MCF 10A (cell line): ENCODE measurements at regions of chr6 and their contacts with region 1.

Region 1: GRCh38 chr6:150180517-150180916 is 37.7 kb downstream of the PPP1R14C start:
- DNase-seq: no peak
- H3K4me3 Mint-ChIP-seq: no peak overlapping the region
- H3K27ac Mint-ChIP-seq: no peak overlapping the region
- H3K4me1 Mint-ChIP-seq: peaks cover 32% of the 10 kb centered on the region
- H3K27me3 Mint-ChIP-seq: no peaks in the 10 kb centered on the region
- CTCF ChIP-seq: no peak

Region 2: GRCh38 chr6:150169609-150170008 is 10.9 kb before region 1 on chr6:
- CTCF ChIA-PET with region 1: interaction called, 3 read pairs
- POLR2A ChIA-PET with region 1: interaction called, 13 read pairs
- intact Hi-C with region 1: no loop called
- DNase-seq: peak; percentile 73
- H3K4me3 Mint-ChIP-seq: no peak overlapping the region
- H3K27ac Mint-ChIP-seq: peak overlapping the region; percentile 69
- H3K4me1 Mint-ChIP-seq: peaks cover 11% of the 10 kb centered on the region
- H3K27me3 Mint-ChIP-seq: no peaks in the 10 kb centered on the region
- CTCF ChIP-seq: no peak

Region 3: DNA sequence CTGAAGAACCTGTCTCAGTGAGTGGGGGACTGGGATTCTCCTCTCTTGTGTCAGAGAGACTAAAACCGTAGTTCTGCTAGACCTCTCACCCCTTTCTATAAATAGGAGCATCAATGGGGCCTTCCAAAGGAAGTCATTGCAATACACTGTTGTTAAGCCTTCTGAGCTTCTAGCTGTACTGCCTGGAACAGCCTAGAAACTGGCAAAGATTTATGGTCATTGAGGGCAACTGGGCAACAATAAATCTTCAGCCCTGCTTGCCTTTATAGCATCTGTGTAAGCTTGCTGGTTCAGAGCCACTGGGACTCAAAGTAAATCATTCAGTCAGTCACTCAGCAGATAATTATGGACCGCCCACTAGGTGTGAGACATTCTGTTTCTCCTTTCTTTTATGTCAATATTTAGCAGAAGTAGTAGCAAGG is 15.5 kb after region 1 on chr6:
- CTCF ChIA-PET with region 1: interaction called, 4 read pairs
- POLR2A ChIA-PET with region 1: interaction called, 10 read pairs
- intact Hi-C with region 1: no loop called
- DNase-seq: no peak
- H3K4me3 Mint-ChIP-seq: no peak overlapping the region
- H3K27ac Mint-ChIP-seq: peak overlapping the region; percentile 67
- H3K4me1 Mint-ChIP-seq: peaks cover 57% of the 10 kb centered on the region
- H3K27me3 Mint-ChIP-seq: no peaks in the 10 kb centered on the region
- CTCF ChIP-seq: no peak

Region 4: DNA sequence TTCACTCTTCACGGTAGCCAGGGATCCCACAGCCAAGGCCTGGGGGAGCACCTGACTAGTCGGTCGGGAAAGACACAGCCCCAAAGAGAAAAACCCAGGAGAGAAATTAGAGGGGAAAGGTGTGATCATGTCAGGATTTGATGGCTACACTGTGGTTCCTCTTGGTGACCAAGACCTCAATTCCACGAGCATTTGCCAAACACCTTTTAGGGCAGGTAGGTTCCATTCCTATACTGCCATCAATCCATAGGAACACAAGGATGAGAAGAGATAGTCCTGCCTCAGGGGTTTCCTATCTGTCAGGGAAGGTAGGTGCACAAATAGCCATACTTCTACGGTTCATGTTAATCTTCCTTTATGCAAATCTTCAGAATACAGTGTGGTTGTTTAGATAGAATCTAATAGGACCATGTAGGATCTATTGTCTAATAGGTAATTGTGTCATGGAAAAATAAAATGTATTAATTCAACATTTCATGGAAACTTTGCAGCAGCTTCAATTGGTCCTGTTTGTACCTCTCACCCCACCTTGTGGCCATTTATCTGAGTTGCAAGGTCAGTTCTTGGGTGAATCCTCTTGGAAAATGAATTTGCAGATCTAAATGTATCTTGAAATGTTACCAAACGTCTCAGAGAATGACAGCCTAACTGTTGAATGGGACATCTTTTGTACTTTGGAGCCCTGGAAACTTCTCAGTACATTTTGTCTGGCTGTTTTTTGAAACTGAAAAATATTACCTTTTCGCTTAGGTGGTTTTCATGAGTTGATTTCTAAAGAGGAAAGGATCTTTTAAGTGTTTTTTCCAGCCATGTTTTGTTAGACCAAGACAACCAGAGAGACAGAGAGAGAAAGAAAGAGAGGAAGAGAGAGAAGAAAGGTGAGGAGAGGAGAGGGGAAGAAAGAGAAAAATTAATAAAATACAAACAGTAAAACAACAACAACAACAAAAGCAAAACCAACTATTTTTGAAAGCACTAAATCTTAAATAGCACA is 154.6 kb after region 1 on chr6:
- CTCF ChIA-PET with region 1: no interaction called
- POLR2A ChIA-PET with region 1: no interaction called
- intact Hi-C with region 1: no loop called
- DNase-seq: peak; percentile 76
- H3K4me3 Mint-ChIP-seq: no peak overlapping the region
- H3K27ac Mint-ChIP-seq: peak overlapping the region; percentile 4
- H3K4me1 Mint-ChIP-seq: peaks cover 18% of the 10 kb centered on the region
- H3K27me3 Mint-ChIP-seq: no peaks in the 10 kb centered on the region
- CTCF ChIP-seq: peak; percentile 82